AG04450 (cell line): ENCODE measurements at regions of chr7 and their contacts with region 1.

Region 1: GRCh38 chr7:133696056-133696455 is 431.1 kb upstream of the LRGUK start:
- DNase-seq: no peak
- H3K4me3 ChIP-seq: no peak overlapping the region
- H3K27ac ChIP-seq: no peak overlapping the region
- H3K27me3 ChIP-seq: no peaks in the 10 kb centered on the region
- CTCF ChIP-seq: no peak

Region 2: DNA sequence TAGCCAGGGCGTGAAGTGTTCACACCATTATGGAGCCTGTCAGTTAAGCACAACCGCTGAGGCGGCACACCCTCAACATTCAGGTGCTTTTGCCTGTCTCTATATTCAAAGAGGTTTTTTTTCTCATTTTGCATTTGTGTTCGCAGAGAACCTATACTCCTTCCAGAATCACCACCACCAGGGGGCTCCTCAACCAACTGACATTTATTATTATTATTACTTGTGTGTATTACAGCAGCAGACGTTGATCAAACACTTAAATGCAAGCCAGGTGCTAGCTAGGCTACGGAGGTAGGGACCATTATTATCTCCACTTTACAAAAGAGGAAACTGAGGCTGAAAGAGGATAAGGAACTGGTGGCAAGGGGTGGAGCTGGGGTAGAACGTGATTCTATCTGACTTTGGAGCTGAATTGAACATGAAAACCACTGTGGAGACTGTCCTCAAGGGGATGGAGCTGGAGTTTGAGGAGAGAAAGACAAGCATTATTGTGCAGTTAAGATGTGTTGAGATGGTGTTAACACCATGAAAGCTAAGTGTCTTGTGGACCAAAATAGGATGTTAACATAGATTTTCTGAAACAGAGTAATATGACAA is 986.0 kb before region 1 on chr7:
- CTCF ChIA-PET with region 1: interaction called, 11 read pairs
- POLR2A ChIA-PET with region 1: no interaction called
- DNase-seq: peak; percentile 4
- H3K4me3 ChIP-seq: no peak overlapping the region
- H3K27ac ChIP-seq: no peak overlapping the region
- H3K27me3 ChIP-seq: peaks cover 5% of the 10 kb centered on the region
- CTCF ChIP-seq: peak; percentile 68

Region 3: DNA sequence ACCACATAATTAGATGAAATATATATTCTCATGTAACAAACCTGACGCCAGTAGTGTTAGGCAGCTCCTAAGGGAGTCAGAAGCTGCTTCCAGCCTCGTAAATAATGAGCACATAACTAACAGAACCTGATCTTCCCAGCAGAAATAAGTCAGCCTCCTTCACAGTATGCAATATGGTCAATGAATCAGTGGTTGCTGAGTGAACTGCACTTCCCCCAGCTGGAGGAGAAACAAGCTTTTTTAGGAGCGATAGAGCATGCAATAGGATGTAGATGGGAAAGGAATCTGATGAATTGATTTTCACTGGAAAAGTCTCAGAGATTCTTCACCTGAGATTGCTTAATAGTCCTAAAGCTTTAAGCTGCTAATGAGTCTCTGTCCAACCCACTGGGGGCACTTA is 93.9 kb after region 1 on chr7:
- CTCF ChIA-PET with region 1: no interaction called
- POLR2A ChIA-PET with region 1: no interaction called
- DNase-seq: no peak
- H3K4me3 ChIP-seq: no peak overlapping the region
- H3K27ac ChIP-seq: no peak overlapping the region
- H3K27me3 ChIP-seq: no peaks in the 10 kb centered on the region
- CTCF ChIP-seq: 0 out of 2 replicates have a peak, but pooled peaks have one; percentile 10